ENCODE measurements at regions of chr16 and their contacts with region 1.

Region 1: GRCh38 chr16:30984669-30985400 is at the start of gene HSD3B7:
- DNase-seq: peak; percentile 90 to 96 (median 94)
- H3K4me3 ChIP-seq: peak within 1 kb of the TSS; percentile 42
- H3K27ac ChIP-seq: no peak within 1 kb of the TSS
- H3K4me1 ChIP-seq: peaks cover 8% of the 10 kb centered on the region
- H3K27me3 ChIP-seq: no peaks in the 10 kb centered on the region
- CTCF ChIP-seq: peak; percentile 87 to 97 (median 97)
- EP300 ChIP-seq: no peak
- POLR2A ChIP-seq: no peak
- total RNA-seq, gene HSD3B7: 8.0 to 24.5 (median 10.5) TPM

Region 2: DNA sequence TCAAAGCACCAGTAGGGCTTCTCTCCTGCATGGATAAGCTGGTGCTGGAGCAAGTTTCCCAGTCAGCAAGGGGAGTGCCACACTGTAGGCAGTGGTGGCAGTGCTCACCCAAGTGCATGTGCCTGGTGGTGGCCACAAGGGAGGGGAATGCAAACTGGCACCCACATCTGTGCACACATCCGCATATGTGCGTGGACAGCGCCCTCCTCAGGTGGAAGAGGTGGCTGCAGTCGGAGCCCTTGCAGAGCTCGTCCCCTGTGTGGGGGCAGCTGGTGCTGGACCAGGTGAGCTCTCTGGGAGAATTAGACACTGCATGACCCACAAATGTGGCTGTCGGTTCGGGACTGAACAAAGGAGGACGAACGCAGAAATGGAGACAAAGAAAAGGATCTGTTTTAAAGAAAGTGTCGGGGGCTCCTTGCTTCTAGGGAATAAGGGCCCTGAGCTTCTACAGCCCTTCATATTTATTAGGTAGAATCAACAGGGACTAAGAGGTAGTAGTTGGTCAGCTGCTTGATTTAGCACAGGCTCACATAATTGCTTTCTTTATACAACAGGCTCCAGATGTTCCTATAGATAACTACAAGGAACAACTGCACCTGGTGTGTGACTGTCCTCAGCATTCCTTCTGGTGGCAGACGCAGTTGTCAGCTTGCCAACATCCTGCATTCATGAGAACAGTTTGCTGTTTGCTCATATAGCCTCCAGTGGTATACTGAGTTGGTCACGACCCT is 369.3 kb before region 1 on chr16:
- intact Hi-C with region 1: no loop called
- DNase-seq: peak in 1 of 5 donors; percentile 42
- H3K4me3 ChIP-seq: no peak overlapping the region
- H3K27ac ChIP-seq: no peak overlapping the region
- H3K4me1 ChIP-seq: no peaks in the 10 kb centered on the region
- H3K27me3 ChIP-seq: no peaks in the 10 kb centered on the region
- CTCF ChIP-seq: no peak
- EP300 ChIP-seq: no peak
- POLR2A ChIP-seq: no peak

Region 3: DNA sequence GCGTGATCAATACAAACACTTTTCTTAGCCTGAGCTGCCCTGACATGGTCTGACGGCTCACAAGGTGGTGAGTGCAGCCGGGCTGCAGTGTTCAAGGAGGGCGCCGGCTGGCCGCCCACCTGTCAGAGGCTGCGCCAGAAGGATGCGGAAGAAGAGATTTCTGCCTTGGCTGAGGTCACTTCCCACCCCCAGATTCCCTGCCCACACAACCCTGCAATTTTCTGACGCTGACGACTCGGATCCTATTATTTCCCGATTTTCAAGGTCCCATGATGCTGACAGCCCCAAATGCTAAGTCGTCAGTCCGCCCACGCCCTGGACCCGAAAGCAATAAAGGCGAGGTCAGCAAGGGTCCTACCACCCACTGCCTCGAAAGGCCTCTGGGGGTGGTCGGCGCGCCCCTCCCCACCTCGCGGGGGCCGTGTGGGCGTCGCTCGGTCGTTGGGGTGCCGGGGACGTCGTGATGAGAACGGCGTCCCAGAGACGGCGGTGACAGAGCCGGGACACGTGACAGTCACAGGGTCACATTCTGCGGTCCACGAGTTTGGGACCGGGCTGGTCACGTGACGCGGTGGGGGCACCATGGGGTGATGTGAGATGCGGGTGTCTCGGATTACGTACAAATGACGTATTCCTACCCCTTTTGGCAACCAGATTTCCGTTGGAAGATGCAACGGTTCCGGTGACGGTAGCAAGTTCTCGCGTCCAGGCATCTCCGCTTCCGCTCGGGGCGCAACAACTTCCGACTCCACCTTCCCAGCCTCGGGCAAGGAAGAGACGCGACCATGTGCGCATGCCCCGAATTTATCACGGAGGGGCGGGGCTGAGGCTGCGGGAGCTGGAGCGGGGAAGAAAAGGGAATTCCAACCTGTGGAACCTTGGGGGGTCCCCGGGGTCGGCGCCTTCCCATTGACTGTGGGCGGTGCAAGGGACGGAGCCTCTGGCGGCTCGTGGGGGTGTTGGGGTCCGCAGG is 48.2 kb after region 1 on chr16 and contains the start of gene STX4:
- intact Hi-C with region 1: loop called in 2 of 4 experiments (anchors 5 to 10 kb)
- DNase-seq: peak; percentile 98 to 99 (median 98)
- H3K4me3 ChIP-seq: peak within 1 kb of the TSS; percentile 76
- H3K27ac ChIP-seq: peak within 1 kb of the TSS; percentile 86 to 97
- H3K4me1 ChIP-seq: peaks cover 6% of the 10 kb centered on the region
- H3K27me3 ChIP-seq: no peaks in the 10 kb centered on the region
- CTCF ChIP-seq: peak in 1 of 3 donors; percentile 11
- EP300 ChIP-seq: peak; percentile 83
- POLR2A ChIP-seq: peak; percentile 62
- total RNA-seq, gene STX4: 26.2 to 73.8 (median 59.2) TPM

Region 4: DNA sequence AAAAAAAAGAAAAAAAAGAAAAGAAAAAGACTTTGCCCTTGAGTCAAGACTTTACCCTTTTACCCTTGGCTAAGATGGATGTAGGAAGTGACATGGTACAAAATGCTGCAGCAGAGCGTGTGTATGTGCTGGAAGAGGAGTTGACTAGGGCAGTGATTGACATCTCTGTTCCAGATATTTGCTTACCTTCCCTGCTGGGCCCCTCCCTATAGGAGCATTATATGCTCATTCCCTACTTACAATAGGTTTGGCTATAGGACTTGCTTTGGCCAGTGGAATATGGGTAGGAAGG is 59.3 kb after region 1 on chr16:
- intact Hi-C with region 1: loop called in 2 of 4 experiments (anchors 10 kb)
- DNase-seq: no peak
- H3K4me3 ChIP-seq: no peak overlapping the region
- H3K27ac ChIP-seq: no peak overlapping the region
- H3K4me1 ChIP-seq: no peaks in the 10 kb centered on the region
- H3K27me3 ChIP-seq: no peaks in the 10 kb centered on the region
- CTCF ChIP-seq: no peak
- EP300 ChIP-seq: no peak
- POLR2A ChIP-seq: no peak

Region 5: DNA sequence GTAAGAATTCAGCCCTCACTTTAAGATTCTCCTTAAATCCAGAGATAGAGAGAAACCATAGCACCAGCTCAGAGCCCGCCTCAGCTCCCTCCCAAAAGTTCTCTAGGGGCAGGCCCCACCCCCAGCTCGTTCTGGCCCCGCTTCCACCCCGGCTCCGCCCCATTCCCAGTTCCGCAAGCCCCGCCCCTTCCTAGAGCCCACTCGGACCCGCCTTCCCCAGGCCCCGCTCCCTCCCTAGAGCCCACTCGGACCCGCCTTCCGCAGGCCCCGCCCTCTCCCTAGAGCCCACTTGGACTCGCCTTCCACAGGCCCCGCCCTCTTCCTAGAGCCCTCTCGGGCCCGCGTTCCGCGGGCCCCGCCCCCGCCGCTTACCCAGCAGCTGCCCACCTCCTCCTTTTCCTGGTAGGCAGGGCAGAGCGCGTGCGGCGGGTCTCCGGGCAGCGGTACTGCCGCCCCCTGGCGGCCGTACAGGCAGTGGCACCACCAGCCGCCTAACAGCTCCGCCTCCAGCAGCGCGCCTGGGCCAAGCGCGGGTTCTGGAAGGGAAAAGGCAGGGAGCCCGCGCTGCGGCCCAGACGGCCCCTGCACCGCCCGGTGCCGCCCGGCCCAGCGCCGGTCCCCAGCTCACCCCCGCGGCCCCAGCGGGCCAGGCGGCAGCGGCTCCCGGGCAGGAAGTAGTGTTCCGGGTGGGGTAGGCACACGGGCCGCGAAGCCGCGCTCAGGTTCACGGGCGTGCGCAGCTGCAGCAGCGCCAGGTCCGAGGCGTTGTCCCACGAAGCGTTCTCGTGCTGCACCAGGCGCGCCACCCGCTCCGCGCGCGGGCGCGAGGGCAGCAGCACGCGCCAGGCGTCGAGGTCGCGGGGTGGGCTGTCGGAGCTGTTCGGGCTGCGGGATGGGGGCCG is 157.5 kb after region 1 on chr16:
- intact Hi-C with region 1: loop called in 1 of 4 experiments (anchors 2 kb)
- DNase-seq: peak; percentile 99 to 100 (median 100)
- H3K4me3 ChIP-seq: peak overlapping the region; percentile 49
- H3K27ac ChIP-seq: peak overlapping the region; percentile 17 to 53
- H3K4me1 ChIP-seq: peaks cover 7% of the 10 kb centered on the region
- H3K27me3 ChIP-seq: no peaks in the 10 kb centered on the region
- CTCF ChIP-seq: peak; percentile 95 to 99 (median 99)
- EP300 ChIP-seq: peak; percentile 28
- POLR2A ChIP-seq: peak; percentile 19

Region 6: DNA sequence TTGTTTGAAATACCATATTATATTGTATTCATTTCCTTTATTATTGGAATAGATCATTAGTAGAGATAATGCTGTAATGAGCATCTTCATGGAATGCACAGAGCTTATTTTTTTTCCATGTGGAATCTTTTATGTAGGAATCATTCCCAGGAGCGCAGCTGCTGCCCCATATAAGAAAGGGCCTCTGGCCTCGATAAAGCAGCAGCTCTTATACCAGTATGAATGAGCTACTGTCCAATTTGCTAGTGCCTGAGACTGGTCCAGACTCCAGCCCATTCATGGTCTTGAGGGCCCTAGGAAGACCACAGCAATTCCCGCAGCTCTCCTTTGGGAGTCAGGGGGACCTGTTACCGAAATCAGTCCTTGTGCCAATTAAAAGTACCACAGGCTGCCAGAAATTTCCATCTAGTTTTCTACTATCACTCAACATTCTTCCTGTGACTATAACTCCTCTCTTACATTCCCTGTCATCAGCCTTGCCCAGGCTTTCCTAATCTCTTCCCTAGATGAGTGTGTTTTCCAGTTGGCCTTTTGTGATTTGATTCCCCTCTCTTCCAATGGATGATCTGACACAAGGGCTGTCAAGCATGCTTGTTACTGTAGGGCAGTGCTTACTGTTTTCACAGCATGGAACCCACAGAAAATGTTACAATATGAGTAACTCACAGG is 455.8 kb after region 1 on chr16:
- intact Hi-C with region 1: loop called (anchors 5 to 10 kb)
- DNase-seq: no peak
- H3K4me3 ChIP-seq: no peak overlapping the region
- H3K27ac ChIP-seq: no peak overlapping the region
- H3K4me1 ChIP-seq: no peaks in the 10 kb centered on the region
- H3K27me3 ChIP-seq: no peaks in the 10 kb centered on the region
- CTCF ChIP-seq: no peak
- EP300 ChIP-seq: no peak
- POLR2A ChIP-seq: no peak

Region 7: GRCh38 chr16:31868691-31869167 is 883.9 kb after region 1 on chr16:
- intact Hi-C with region 1: loop called in 3 of 4 experiments (anchors 5 to 10 kb)
- DNase-seq: peak; percentile 67 to 87 (median 83)
- H3K4me3 ChIP-seq: no peak overlapping the region
- H3K27ac ChIP-seq: no peak overlapping the region
- H3K4me1 ChIP-seq: no peaks in the 10 kb centered on the region
- H3K27me3 ChIP-seq: no peaks in the 10 kb centered on the region
- CTCF ChIP-seq: peak; percentile 49 to 78 (median 74)
- EP300 ChIP-seq: no peak
- POLR2A ChIP-seq: no peak

Region 8: DNA sequence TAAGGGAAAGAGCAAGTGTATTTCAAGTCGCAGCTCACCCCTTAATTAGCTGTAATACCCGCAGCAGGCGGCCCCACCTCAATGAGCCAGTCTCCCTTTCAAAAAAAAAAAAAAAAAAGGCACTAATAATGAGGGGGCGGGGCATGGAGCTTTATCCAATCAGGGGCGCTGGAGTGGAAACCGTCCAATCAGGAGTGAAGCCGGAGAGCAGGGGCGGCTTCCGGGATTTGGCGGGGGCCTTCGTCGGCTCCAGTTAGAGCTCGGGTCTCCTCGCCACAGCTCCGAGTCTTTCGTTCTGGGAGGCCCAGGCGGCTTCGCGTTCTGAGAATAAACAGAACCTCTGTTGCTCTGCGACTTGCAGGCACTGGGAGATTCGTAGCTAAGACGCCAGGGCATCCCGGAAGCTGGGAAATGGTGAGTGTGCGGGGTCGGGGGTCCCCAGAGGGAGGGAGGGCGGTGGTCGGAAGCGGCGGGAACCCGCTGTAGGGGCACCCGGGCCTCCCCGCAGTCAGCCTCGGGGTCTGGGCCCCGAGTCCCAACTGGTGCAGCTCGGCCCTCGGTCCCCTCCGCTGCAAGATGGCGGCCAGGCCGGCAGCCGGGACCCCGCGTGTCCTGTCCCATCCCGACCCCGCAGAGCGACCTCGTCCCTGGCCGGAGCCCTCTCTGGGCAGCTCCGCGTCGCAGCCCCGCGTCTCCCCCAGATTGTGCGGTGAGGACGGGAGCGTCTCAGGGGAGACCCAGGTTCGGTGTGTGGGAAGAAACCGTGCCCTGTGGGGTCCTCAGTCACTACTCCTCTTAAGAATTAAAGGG is 888.9 kb after region 1 on chr16 and contains the start of gene ZNF267:
- intact Hi-C with region 1: loop called in 3 of 4 experiments (anchors 5 to 10 kb)
- DNase-seq: peak; percentile 94 to 97 (median 96)
- H3K4me3 ChIP-seq: peak within 1 kb of the TSS; percentile 71
- H3K27ac ChIP-seq: peak within 1 kb of the TSS; percentile 82 to 87
- H3K4me1 ChIP-seq: no peaks in the 10 kb centered on the region
- H3K27me3 ChIP-seq: no peaks in the 10 kb centered on the region
- CTCF ChIP-seq: no peak
- EP300 ChIP-seq: no peak
- POLR2A ChIP-seq: peak; percentile 54
- total RNA-seq, gene ZNF267: 10.0 to 16.3 (median 13.6) TPM